ENCODE measurements at regions of chr15 and their contacts with region 1.

Region 1: GRCh38 chr15:88274553-88275460 is 18.3 kb upstream of the NTRK3 start:
- DNase-seq: peak; percentile 44
- H3K4me3 ChIP-seq: no peak overlapping the region
- H3K27ac ChIP-seq: no peak overlapping the region
- H3K4me1 ChIP-seq: no peaks in the 10 kb centered on the region
- H3K27me3 ChIP-seq: peaks cover 2% of the 10 kb centered on the region
- CTCF ChIP-seq: peak; percentile 83 to 96

Region 2: DNA sequence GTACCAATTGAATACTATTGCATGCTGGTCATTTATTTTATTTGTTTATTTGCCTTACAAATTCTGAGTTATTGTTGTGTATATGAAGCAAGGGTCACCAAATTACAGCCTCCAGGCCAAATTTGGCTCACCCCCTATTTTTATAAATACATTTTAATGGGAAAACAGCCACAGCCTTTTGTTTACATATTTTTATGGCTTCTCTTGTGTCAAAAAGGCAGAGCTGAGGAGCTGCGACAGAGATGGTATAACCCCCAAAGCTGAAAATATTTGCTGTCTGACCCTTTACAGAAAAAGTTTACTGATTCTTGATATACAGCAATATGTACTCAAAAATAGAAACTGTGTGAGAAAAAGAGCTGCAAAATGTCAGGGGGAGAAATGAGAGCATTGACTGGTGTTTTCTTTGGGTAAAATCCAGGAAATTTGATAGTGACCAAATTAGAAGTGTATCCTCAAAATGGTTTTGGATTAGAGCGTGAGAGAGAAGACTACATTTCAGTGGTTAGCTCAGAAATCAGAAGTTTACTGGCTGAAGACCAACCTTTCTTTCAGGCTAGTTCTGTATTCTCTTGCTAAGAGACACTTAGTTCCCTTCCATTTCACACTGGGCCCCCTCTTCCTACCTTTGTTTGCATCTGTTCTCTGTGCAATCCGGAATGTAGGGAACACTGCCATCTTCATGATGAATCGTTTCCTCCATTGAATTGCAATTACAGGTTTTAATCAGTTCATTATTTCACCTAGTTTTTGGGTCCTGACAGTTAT is 1437.3 kb before region 1 on chr15:
- CTCF ChIA-PET with region 1: interaction called, 15 read pairs
- dilution Hi-C with region 1: no loop called
- in situ Hi-C with region 1: no loop called
- intact Hi-C with region 1: no loop called
- DNase-seq: no peak
- H3K4me3 ChIP-seq: no peak overlapping the region
- H3K27ac ChIP-seq: no peak overlapping the region
- H3K4me1 ChIP-seq: no peaks in the 10 kb centered on the region
- H3K27me3 ChIP-seq: no peaks in the 10 kb centered on the region
- CTCF ChIP-seq: no peak